Activated B cell treated with CpG ODN at 0.5 μM for 24 hours (primary cell): ENCODE measurements at regions of chr16 and their contacts with region 1.

Region 1: DNA sequence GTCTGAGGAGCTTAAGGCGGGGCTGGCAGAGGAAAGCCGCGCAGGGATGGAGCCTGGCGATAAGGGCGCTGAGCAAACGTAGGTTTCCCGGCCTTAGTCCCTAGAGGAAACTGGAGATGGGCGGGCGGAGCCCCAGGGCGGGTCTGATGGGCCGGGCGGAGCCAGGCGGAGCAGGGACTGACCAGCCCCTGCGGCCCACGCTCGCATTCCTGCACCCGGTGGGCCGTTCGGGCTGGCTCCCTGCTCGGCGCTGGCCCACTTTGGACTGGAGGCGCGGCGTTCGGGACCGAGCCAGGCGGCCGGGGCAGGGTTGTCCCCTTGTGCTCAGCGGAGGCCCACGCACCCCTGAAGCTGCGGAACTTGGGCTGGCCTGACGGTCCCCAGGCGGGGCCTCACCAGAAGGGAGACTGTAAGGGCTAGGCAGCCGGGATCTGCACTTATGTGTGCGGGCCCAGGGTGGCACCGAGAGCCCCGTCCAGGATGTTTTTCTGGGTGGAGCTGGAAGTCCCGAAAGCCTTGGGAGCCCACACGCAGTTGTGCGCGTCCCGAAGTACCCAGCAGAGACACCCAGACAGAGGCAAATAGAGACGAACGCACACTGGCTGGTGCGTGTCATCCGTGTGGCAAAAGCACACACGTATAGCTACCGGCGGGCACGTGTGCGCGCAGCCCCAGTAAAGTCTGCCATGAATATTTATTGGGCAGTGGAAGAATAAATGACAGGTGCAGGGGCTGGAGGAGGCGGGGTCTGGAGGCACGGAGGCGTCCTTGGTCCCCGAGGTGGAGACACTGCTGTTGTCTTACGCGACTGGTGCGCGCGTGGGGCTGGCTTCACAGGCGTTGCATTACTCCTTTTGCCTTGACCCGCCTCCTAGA is 1.4 kb downstream of the PYDC1 start:
- DNase-seq: peak; percentile 37
- ATAC-seq: peak; percentile 63
- H3K4me3 Mint-ChIP-seq: peak overlapping the region; percentile 83
- H3K27ac Mint-ChIP-seq: no peak overlapping the region
- H3K4me1 Mint-ChIP-seq: peaks cover 48% of the 10 kb centered on the region
- H3K27me3 Mint-ChIP-seq: peaks cover 19% of the 10 kb centered on the region
- CTCF ChIP-seq: no peak

Region 2: DNA sequence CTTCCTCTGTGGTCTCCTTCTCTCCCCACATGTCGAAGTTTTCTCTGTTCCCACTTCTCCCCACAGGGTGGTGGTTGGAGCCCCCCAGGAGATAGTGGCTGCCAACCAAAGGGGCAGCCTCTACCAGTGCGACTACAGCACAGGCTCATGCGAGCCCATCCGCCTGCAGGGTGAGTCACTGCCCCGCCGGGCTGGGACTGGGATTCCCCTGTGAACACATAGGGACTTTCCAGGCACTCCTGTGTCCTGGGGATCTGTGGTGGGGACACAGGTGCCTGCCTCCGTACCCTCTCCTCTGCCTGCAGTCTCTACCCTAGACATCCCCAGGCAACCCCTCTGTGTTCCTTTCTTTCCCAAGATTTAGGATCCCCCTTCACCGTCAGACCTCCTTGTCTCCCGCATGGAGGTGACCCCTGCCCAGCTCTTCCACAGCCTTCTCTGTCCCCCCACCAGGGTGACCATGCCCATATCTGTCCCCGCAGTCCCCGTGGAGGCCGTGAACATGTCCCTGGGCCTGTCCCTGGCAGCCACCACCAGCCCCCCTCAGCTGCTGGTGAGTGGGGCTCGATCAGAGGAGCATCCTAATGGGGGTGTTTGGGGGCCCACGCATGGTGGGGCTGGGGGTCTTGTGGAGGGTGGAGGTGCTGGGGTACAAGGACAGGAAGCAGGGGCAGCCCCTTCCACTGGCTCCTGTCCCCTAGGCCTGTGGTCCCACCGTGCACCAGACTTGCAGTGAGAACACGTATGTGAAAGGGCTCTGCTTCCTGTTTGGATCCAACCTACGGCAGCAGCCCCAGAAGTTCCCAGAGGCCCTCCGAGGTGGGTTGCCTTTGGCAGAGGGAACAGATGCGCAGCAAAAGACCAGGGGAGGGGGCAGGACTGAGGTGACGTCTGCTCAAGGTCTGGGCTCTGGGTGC is 50.1 kb after region 1 on chr16:
- CTCF ChIA-PET with region 1: no interaction called
- POLR2A ChIA-PET with region 1: interaction called, 11 read pairs
- intact Hi-C with region 1: no loop called
- DNase-seq: peak; percentile 68
- ATAC-seq: peak; percentile 93
- H3K4me3 Mint-ChIP-seq: peak overlapping the region; percentile 72
- H3K27ac Mint-ChIP-seq: peak overlapping the region; percentile 85
- H3K4me1 Mint-ChIP-seq: peaks cover 76% of the 10 kb centered on the region
- H3K27me3 Mint-ChIP-seq: no peaks in the 10 kb centered on the region
- CTCF ChIP-seq: no peak